Activated CD4-positive, alpha-beta T cell treated with anti-CD3 and anti-CD28 coated beads for 36 hours (primary cell): ENCODE measurements at regions of chr12 and their contacts with region 1.

Region 1: GRCh38 chr12:53005986-53006809 is at the start of gene EIF4B:
- DNase-seq: peak; percentile 100
- ATAC-seq: peak; percentile 93
- H3K4me3 Mint-ChIP-seq: peak within 1 kb of the TSS; percentile 96
- H3K27ac Mint-ChIP-seq: peak within 1 kb of the TSS; percentile 99
- H3K4me1 Mint-ChIP-seq: peaks cover 40% of the 10 kb centered on the region
- H3K27me3 Mint-ChIP-seq: no peaks in the 10 kb centered on the region
- total RNA-seq, gene EIF4B: 698 to 781 TPM

Region 2: GRCh38 chr12:51951199-51951842 is 1054.9 kb before region 1 on chr12 and contains the start of gene ACVR1B:
- CTCF ChIA-PET with region 1: no interaction called
- POLR2A ChIA-PET with region 1: no interaction called
- intact Hi-C with region 1: loop called in 1 of 2 experiments (anchors 5 kb)
- DNase-seq: peak; percentile 94
- ATAC-seq: peak; percentile 98
- H3K4me3 Mint-ChIP-seq: peak within 1 kb of the TSS; percentile 90
- H3K27ac Mint-ChIP-seq: peak within 1 kb of the TSS; percentile 76
- H3K4me1 Mint-ChIP-seq: peaks cover 40% of the 10 kb centered on the region
- H3K27me3 Mint-ChIP-seq: peaks cover 10% of the 10 kb centered on the region
- total RNA-seq, gene ACVR1B: 10.1 to 12.7 TPM

Region 3: DNA sequence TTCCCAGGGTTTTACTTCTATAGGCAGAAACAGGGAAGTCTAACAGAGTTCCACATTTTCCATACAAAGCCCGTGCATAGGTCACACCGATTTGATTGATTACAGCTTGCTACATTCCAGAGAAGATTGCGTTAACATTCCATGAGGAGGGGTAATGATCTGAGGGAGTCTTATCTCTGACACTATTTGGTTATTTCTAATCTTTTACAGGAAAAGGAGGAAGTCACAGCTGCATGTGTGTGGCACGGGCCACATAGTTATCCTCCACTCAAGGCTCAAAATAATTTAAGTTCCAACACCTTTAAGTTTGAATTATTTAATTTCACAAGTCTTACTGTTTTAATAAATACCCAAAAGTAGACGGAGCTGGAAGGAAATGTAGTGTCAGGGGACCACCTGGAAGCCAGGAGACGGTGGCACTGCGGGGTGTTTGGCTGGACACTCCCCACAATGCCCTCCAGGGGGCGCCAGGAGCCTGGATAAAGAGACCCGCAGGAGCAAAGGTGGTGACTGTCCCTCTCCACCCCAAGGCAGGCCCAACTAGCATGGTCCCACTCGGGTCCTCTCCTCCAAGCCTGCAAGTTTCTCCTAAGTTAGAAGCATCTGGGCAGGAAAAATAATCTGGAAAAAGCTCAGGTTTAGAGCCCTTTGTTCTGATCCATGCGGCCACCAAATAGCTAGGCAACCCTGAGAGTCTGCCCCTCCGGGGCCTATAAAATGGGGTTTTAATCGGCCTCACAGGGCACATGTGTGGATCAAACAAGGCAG is 121.5 kb before region 1 on chr12:
- CTCF ChIA-PET with region 1: interaction called, 14 read pairs
- POLR2A ChIA-PET with region 1: no interaction called
- intact Hi-C with region 1: no loop called
- DNase-seq: peak; percentile 90
- ATAC-seq: peak; percentile 90
- H3K4me3 Mint-ChIP-seq: no peak overlapping the region
- H3K27ac Mint-ChIP-seq: no peak overlapping the region
- H3K4me1 Mint-ChIP-seq: peaks cover 7% of the 10 kb centered on the region
- H3K27me3 Mint-ChIP-seq: peaks cover 5% of the 10 kb centered on the region

Region 4: DNA sequence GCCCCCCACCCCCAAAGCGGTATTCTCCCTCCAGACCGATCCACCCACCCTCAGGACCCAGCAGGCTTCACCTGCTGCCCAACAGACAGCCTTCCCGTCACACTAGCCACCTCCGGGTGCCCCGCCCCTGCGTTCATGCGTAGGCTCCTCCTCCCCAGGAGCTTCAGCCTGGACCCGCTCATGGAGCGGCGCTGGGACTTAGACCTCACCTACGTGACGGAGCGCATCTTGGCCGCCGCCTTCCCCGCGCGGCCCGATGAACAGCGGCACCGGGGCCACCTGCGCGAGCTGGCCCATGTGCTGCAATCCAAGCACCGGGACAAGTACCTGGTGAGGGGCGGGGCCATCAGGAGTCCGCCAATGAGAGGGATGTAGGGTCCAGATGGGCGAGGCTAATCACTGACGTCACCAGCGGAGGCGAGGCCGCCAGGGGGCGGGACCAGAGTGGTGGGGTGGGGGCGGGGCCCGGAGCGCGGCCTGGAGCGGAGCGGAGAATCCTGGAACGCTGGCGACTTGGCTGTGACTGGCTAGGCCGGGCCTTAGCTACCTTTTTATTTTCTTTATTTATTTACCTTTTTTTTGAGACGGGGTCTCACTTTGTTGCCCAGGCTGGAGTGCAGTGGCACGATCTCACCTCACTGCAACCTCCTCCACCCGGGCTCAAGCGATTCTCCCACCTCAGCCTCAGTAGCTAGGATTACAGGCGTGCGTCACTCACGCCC is 48.1 kb after region 1 on chr12:
- CTCF ChIA-PET with region 1: interaction called, 7 read pairs
- POLR2A ChIA-PET with region 1: interaction called, 6 read pairs
- intact Hi-C with region 1: loop called in 1 of 2 experiments (anchors 1 kb)
- DNase-seq: peak; percentile 96
- ATAC-seq: peak; percentile 94
- H3K4me3 Mint-ChIP-seq: peak overlapping the region; percentile 86
- H3K27ac Mint-ChIP-seq: peak overlapping the region; percentile 84
- H3K4me1 Mint-ChIP-seq: peaks cover 14% of the 10 kb centered on the region
- H3K27me3 Mint-ChIP-seq: no peaks in the 10 kb centered on the region

Region 5: DNA sequence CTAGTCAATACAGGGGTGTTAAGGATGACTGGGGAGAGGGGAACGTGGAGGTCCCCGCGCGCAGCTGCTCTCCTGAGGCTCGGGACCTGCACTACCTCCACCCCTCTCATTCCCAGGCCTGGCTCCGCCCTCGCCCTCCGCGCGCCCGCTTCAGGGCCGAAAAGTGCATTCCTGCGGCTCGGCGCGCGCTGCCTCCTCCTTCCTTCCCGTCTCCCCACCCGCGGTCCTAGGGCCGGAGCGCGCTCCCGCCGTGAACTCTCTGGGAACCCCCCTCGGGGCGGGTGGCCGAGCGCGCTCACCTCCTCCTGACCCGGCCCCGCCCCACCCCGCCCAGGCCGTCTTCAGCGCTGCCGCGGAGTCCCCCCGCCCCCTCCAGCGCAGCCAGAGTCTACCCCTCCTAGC is 214.6 kb after region 1 on chr12:
- CTCF ChIA-PET with region 1: no interaction called
- POLR2A ChIA-PET with region 1: no interaction called
- intact Hi-C with region 1: loop called in 1 of 2 experiments (anchors 1 kb)
- DNase-seq: peak; percentile 93
- ATAC-seq: peak; percentile 57
- H3K4me3 Mint-ChIP-seq: peak overlapping the region; percentile 83
- H3K27ac Mint-ChIP-seq: peak overlapping the region; percentile 87
- H3K4me1 Mint-ChIP-seq: peaks cover 78% of the 10 kb centered on the region
- H3K27me3 Mint-ChIP-seq: no peaks in the 10 kb centered on the region

Region 6: GRCh38 chr12:53441040-53441833 is 435.0 kb after region 1 on chr12 and contains the start of gene PRR13:
- CTCF ChIA-PET with region 1: no interaction called
- POLR2A ChIA-PET with region 1: no interaction called
- intact Hi-C with region 1: loop called in 1 of 2 experiments (anchors 1 kb)
- DNase-seq: peak; percentile 100
- ATAC-seq: peak; percentile 99
- H3K4me3 Mint-ChIP-seq: peak within 1 kb of the TSS; percentile 92
- H3K27ac Mint-ChIP-seq: peak within 1 kb of the TSS; percentile 95
- H3K4me1 Mint-ChIP-seq: peaks cover 30% of the 10 kb centered on the region
- H3K27me3 Mint-ChIP-seq: no peaks in the 10 kb centered on the region
- total RNA-seq, gene PRR13: 250 to 266 TPM

Region 7: GRCh38 chr12:53675651-53676453 is 669.7 kb after region 1 on chr12 and contains the start of gene ATP5MC2:
- CTCF ChIA-PET with region 1: interaction called, 3 read pairs
- POLR2A ChIA-PET with region 1: no interaction called
- intact Hi-C with region 1: loop called in 1 of 2 experiments (anchors 1 kb)
- DNase-seq: peak; percentile 99
- ATAC-seq: peak; percentile 96
- H3K4me3 Mint-ChIP-seq: peak within 1 kb of the TSS; percentile 93
- H3K27ac Mint-ChIP-seq: peak within 1 kb of the TSS; percentile 95
- H3K4me1 Mint-ChIP-seq: peaks cover 29% of the 10 kb centered on the region
- H3K27me3 Mint-ChIP-seq: peaks cover 20% of the 10 kb centered on the region
- total RNA-seq, gene ATP5MC2: 356 to 415 TPM